Mammary epithelial cell (primary cell): ENCODE measurements at regions of chr17 and their contacts with region 1.

Region 1: GRCh38 chr17:12180644-12181261 is 160.1 kb downstream of the MAP2K4 start:
- DNase-seq: peak; percentile 24
- H3K4me3 ChIP-seq: no peak overlapping the region
- H3K27ac ChIP-seq: no peak overlapping the region
- H3K4me1 ChIP-seq: no peaks in the 10 kb centered on the region
- H3K27me3 ChIP-seq: no peaks in the 10 kb centered on the region
- CTCF ChIP-seq: peak; percentile 73 to 75

Region 2: DNA sequence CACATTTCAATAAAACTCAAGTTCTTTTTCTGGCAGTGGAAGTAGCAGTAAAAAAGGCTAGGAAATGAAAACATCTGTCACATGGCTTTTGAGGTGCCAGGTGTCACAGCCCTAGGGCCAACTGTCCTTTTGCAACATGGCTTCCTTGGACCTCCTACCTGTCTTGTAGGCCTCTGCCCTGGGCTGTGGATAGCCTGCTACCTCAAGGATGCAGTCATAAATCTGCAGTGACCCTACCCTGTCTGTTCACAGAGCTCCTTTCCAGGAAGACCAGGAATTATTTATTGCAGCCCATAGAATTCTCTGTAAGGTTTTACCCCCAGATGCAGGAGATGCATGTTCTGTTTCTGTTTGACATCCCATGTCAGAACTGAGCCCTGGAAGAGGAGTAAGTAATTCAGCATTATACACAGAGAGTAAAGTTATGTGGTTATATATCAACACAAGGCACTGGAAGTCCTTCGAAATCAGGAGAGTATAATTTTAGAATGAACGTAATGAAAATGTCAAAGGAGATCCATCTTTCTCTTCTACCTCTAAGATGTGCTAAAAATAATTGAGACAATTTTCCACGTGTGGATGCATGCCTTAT is 12.5 kb after region 1 on chr17:
- CTCF ChIA-PET with region 1: no interaction called
- dilution Hi-C with region 1: no loop called
- in situ Hi-C with region 1: no loop called
- intact Hi-C with region 1: no loop called
- DNase-seq: no peak
- H3K4me3 ChIP-seq: no peak overlapping the region
- H3K27ac ChIP-seq: no peak overlapping the region
- H3K4me1 ChIP-seq: no peaks in the 10 kb centered on the region
- H3K27me3 ChIP-seq: no peaks in the 10 kb centered on the region
- CTCF ChIP-seq: no peak

Region 3: DNA sequence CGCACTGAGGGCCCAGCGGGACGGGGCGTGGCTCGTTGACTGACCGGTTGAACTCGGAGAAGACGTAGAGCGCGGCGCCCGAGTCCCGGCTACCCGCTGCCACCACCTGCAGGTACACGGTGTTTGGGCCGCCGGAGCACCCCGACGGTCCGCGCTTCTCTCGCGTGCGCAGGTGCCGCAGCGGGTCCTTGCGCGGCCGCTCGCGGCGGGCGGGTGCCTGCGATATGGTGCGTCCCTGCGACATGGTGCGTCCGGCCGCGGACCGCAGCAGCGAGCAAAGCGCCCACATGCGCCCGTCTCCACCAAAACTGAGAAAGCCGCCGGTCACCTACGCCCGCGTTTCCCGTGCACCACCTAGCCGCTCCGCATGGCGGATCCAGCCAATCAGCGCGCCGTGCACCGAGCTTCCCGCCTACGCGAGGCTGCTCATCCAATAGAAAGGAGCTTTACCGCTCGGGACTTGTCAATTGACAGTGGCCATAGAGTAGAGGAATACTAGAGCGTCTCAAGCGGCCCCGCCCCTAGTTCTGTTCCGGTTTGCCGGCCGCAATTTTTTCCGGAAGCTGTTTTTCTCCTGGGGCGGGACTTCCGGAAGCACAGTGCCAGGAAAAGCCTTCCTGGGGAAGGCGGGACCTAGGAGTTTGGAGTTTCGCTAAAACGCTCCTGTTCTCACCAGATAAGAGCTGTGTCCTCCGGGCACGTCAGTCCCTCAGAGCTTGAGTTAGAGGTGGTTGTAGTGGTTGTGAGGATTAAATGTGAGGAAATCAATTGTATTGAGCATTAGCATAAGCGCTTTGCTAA is 837.1 kb after region 1 on chr17 and contains the start of gene ELAC2:
- CTCF ChIA-PET with region 1: no interaction called
- dilution Hi-C with region 1: no loop called
- in situ Hi-C with region 1: loop called (anchors 25 kb)
- intact Hi-C with region 1: no loop called
- DNase-seq: peak; percentile 98
- H3K4me3 ChIP-seq: peak within 1 kb of the TSS; percentile 61 to 79 (median 65)
- H3K27ac ChIP-seq: peak within 1 kb of the TSS; percentile 81
- H3K4me1 ChIP-seq: peaks cover 6% of the 10 kb centered on the region
- H3K27me3 ChIP-seq: no peaks in the 10 kb centered on the region
- CTCF ChIP-seq: peak in 1 of 2 donors; percentile 20
- total RNA-seq, gene ELAC2: 69.9 to 107 TPM